PC-3 (cell line): ENCODE measurements at regions of chr12 and their contacts with region 1.

Region 1: DNA sequence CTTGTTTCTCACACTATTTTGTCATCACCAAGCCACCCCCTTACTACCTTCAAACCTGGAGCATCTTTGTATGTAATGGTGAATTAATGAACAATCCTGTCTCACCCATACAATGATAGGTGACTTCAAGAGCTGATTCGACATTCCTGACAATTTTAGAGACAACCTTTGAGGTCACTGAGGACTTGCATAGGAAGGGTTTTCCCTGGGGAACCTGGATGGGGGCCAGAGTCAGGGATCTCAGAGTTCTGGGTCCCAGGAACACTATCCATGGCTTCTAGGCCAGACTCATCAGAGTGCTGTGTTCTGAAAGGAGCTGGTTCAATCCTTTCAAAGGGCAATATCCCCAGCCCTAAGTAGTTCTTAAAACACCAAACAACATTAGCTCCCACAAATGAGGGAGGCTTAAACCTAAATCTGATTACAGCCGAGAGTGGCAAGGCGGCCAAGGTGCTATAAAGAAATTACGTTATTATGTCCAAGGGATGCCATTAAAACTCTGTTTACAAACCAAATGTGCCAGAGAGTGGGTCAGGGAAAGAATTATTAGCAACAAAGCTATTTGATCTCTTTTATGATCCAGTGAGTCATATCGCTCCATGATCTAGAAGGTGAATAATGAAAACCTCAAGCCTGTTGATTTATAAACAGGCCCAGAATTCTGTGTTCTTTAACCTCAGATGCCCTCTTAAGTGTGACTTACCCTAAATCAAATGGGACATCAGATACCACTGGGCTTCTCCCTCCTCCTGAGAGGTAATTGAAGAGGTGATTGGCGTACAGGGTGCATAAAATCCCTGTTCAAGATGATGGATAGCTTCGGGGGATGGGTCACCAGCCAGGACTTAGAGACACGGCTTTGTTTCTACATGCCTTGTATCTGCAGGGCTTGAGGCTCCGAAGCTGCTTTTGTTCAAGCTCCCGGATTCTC is 230.2 kb upstream of the TBX3 start:
- DNase-seq: peak; percentile 94
- ATAC-seq: peak; percentile 50
- H3K4me3 ChIP-seq: no peak overlapping the region; the same call in 1 of the 2 replicates
- H3K27ac ChIP-seq: peak overlapping the region; percentile 57
- H3K4me1 ChIP-seq: peaks cover 67% of the 10 kb centered on the region
- H3K27me3 ChIP-seq: no peaks in the 10 kb centered on the region
- CTCF ChIP-seq: no peak

Region 2: DNA sequence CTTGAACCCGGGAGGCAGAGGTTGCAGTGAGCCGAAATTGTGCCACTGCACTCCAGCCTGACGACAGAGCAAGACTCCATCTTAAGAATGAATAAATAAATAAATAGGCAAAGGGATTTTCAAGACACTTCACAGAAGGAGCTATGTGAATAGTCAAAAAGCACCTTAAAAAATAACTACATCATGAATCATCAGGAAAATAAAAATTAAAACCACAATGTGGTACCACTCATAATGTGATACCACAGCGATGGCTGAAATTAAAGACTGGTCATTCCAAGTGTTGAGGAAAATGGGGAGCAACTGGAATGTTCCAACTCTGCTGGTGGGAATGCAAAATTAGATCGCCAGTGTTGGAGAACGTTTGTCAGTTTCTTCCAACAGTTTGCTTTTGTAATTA is 137.1 kb before region 1 on chr12:
- CTCF ChIA-PET with region 1: interaction called, 6 read pairs
- POLR2A ChIA-PET with region 1: interaction called, 3 read pairs
- intact Hi-C with region 1: loop called (anchors 5 kb)
- DNase-seq: peak; percentile 93
- ATAC-seq: peak; percentile 84
- H3K4me3 ChIP-seq: peak overlapping the region; percentile 49; the same call in 1 of the 2 replicates
- H3K27ac ChIP-seq: peak overlapping the region; percentile 87
- H3K4me1 ChIP-seq: peaks cover 20% of the 10 kb centered on the region
- H3K27me3 ChIP-seq: no peaks in the 10 kb centered on the region
- CTCF ChIP-seq: no peak

Region 3: DNA sequence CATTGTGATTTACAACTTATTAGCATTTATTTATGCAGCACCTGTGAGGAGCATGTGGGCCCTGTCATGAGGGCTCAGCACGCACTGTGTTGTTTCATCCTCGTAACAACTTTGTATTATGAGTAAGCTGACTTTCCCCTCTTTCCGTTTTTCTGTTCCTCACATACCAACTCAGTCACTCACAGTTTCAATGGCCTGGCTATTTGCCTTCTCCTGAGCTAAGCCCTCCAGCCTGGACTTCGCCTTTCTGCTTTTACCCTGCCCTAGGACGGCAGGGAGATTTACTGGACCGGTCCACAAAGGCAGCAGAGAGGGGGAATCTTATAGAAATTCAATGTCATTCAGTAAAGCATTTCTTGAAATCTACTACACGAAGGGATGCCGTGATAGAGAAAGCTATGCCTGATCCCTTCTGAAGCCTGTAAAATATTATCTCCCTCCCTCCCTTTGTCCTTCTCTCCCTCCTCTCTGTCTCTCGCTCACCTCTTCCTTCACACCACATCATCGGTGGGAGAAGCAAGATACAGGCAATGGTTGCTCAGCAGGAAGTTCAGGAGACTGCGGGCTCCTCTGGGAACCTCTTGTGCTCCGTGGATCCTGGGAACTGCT is 10.9 kb before region 1 on chr12:
- CTCF ChIA-PET with region 1: no interaction called
- POLR2A ChIA-PET with region 1: interaction called, 9 read pairs
- intact Hi-C with region 1: loop called (anchors 1 kb)
- DNase-seq: peak; percentile 96
- ATAC-seq: peak; percentile 87
- H3K4me3 ChIP-seq: peak overlapping the region; percentile 61
- H3K27ac ChIP-seq: peak overlapping the region; percentile 94
- H3K4me1 ChIP-seq: peaks cover 47% of the 10 kb centered on the region
- H3K27me3 ChIP-seq: no peaks in the 10 kb centered on the region
- CTCF ChIP-seq: no peak

Region 4: DNA sequence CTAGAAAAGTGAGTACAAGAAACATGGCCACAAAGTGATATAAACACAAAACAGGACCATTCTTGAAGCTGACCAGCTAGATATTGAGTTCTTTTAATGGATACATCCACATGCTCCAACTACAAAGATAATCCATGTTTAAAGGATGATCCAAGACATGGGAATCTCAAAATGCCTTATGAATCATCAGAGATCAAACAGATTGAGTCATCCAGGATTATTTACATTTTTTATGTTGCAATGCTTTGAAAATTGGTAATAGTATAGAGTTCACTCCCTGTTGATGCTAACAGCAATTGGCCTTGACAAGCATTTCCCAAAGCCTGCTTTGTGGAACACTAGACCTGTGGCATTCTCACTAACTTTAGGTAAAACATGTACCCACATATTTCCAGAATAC is 62.8 kb after region 1 on chr12:
- CTCF ChIA-PET with region 1: interaction called, 4 read pairs
- POLR2A ChIA-PET with region 1: no interaction called
- intact Hi-C with region 1: loop called (anchors 2 kb)
- DNase-seq: peak; percentile 97
- ATAC-seq: peak; percentile 93
- H3K4me3 ChIP-seq: no peak overlapping the region
- H3K27ac ChIP-seq: peak overlapping the region; percentile 81
- H3K4me1 ChIP-seq: peaks cover 26% of the 10 kb centered on the region
- H3K27me3 ChIP-seq: no peaks in the 10 kb centered on the region
- CTCF ChIP-seq: no peak

Region 5: GRCh38 chr12:115008929-115009328 is 94.8 kb after region 1 on chr12:
- CTCF ChIA-PET with region 1: no interaction called
- POLR2A ChIA-PET with region 1: interaction called, 3 read pairs
- intact Hi-C with region 1: loop called (anchors 1 kb)
- DNase-seq: no peak
- ATAC-seq: no peak
- H3K4me3 ChIP-seq: no peak overlapping the region
- H3K27ac ChIP-seq: no peak overlapping the region
- H3K4me1 ChIP-seq: peaks cover 51% of the 10 kb centered on the region
- H3K27me3 ChIP-seq: no peaks in the 10 kb centered on the region
- CTCF ChIP-seq: no peak

Region 6: GRCh38 chr12:115341442-115341841 is 427.3 kb after region 1 on chr12:
- CTCF ChIA-PET with region 1: no interaction called
- POLR2A ChIA-PET with region 1: no interaction called
- intact Hi-C with region 1: loop called (anchors 5 kb)
- DNase-seq: peak; percentile 99
- ATAC-seq: peak; percentile 79
- H3K4me3 ChIP-seq: no peak overlapping the region
- H3K27ac ChIP-seq: peak overlapping the region; percentile 90
- H3K4me1 ChIP-seq: peaks cover 45% of the 10 kb centered on the region
- H3K27me3 ChIP-seq: no peaks in the 10 kb centered on the region
- CTCF ChIP-seq: no peak